WTC11 (cell line): ENCODE measurements at regions of chr11 and their contacts with region 1.

Region 1: DNA sequence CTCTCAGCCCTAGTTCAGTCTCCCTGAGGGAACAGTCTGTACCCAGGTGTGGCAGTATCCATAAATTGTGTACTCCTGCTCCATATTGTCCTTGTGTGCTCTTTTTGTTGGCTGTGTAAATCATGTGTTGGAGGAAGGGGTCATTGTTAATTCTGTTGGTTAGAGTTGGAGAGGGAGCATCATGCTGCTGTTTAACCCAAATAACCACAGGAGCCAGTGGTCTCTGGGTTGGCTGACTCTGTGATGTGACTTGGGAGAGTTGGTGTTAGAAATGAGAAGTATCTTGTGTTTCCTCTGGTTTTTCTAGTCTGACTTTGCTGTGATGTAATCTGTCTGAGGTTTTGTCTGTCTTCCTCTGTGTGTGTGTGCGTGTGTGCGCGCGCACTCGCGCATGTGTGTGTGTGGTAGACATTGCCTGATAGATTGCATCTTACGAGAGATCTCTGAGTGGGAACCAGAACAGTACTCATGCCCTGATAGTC is 30.5 kb downstream of the CTNND1 start:
- DNase-seq: no peak
- ATAC-seq: no peak
- H3K4me3 Mint-ChIP-seq: no peak overlapping the region
- H3K27ac Mint-ChIP-seq: peak overlapping the region; percentile 85
- H3K4me1 Mint-ChIP-seq: peaks cover 41% of the 10 kb centered on the region
- H3K27me3 Mint-ChIP-seq: no peaks in the 10 kb centered on the region
- CTCF ChIP-seq: no peak

Region 2: DNA sequence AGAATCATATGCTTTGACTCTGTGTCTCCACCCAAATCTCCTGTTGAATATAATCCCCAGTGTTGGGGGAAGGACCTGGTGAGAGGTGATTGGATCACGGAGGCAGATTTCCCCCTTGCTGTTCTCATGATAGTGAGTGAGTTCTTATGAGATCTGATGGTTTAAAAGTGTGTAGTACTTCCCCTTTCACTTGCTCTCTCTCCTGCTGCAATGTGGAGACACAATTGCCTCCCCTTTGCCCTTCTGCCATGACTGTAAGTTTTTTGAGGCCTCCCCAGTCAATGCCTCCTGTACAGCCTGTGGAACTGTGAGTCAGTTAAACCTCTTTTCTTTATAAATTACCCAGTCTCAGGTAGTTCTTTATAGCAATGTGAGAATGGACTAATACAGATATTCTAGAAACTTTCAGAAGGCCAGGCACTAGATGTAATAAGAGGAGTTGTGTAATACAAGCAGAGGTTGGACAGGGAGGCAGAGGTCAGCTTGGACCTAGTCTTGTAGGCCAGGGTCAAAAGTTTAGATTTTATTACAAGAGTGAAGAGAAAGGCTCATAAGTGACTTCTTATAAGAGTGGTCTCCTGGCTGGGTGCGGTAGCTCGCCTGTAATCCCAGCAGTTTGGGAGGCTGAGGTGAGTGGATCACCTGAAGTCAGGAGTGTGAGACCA is 203.9 kb before region 1 on chr11:
- CTCF ChIA-PET with region 1: no interaction called
- POLR2A ChIA-PET with region 1: no interaction called
- DNase-seq: no peak
- ATAC-seq: no peak
- H3K4me3 Mint-ChIP-seq: no peak overlapping the region
- H3K27ac Mint-ChIP-seq: no peak overlapping the region
- H3K4me1 Mint-ChIP-seq: peaks cover 9% of the 10 kb centered on the region
- H3K27me3 Mint-ChIP-seq: peaks cover 4% of the 10 kb centered on the region
- CTCF ChIP-seq: no peak

Region 3: GRCh38 chr11:57751676-57752253 is 40.3 kb before region 1 on chr11 and contains the start of gene BTBD18:
- CTCF ChIA-PET with region 1: interaction called, 14 read pairs
- POLR2A ChIA-PET with region 1: no interaction called
- DNase-seq: peak; percentile 32
- ATAC-seq: peak; percentile 86
- H3K4me3 Mint-ChIP-seq: no peak within 1 kb of the TSS
- H3K27ac Mint-ChIP-seq: peak within 1 kb of the TSS; percentile 75
- H3K4me1 Mint-ChIP-seq: peaks cover 21% of the 10 kb centered on the region
- H3K27me3 Mint-ChIP-seq: no peaks in the 10 kb centered on the region
- CTCF ChIP-seq: peak; percentile 24; the same call in 1 of the 2 replicates
- total RNA-seq, gene BTBD18: 0.09 to 0.14 TPM in 2 of 3 replicates, not detected in the other